Mammary epithelial cell (primary cell): ENCODE measurements at regions of chr1 and their contacts with region 1.

Region 1: DNA sequence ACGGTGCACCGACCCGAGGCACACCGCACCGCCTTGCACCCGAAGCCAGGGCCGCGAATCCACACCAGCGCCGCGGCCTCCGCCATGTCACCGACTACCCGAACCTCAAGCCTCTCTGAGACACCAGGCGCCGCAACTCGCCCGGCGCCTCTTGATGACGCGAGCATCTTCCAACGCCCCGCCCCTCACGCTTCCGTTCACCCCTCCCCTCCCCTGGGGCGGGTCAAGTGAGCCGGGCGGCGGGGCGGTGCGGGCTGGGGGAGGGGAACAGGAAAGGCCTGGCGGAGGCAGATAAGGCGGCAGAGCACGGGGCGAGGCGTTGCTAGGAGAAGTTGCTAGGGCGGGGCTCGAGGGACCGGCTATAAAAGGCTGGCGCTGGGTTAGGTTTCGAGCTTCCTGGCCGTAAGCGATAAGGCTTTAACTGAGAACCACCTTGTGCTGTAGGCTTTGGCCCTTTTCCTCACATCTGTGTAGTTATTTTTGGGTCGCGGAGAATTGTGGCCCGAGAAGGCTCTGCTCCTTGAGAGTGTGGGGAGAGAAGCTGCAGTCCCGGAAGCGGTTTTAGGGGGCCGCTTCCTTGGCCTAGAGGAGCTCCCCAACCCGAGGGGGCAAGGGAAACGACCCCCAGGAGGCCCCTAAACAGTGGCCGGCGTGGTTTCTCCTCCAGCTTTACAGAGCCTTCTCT is at the start of gene SDE2:
- DNase-seq: peak; percentile 98
- H3K4me3 ChIP-seq: peak within 1 kb of the TSS; percentile 89 to 94 (median 93)
- H3K27ac ChIP-seq: peak within 1 kb of the TSS; percentile 94
- H3K4me1 ChIP-seq: peaks cover 29% of the 10 kb centered on the region
- H3K27me3 ChIP-seq: no peaks in the 10 kb centered on the region
- CTCF ChIP-seq: no peak
- total RNA-seq, gene SDE2: 22.0 to 23.5 TPM

Region 2: GRCh38 chr1:225923692-225924555 is 75.4 kb before region 1 on chr1 and contains the start of gene PYCR2:
- CTCF ChIA-PET with region 1: no interaction called
- dilution Hi-C with region 1: loop called (anchors 5 kb)
- in situ Hi-C with region 1: no loop called
- intact Hi-C with region 1: no loop called
- DNase-seq: peak; percentile 94
- H3K4me3 ChIP-seq: peak within 1 kb of the TSS; percentile 69 to 97 (median 75)
- H3K27ac ChIP-seq: peak within 1 kb of the TSS; percentile 69
- H3K4me1 ChIP-seq: peaks cover 40% of the 10 kb centered on the region
- H3K27me3 ChIP-seq: no peaks in the 10 kb centered on the region
- CTCF ChIP-seq: no peak
- total RNA-seq, gene PYCR2: 64.2 to 73.1 TPM

Region 3: GRCh38 chr1:226051356-226051755 is 52.0 kb after region 1 on chr1:
- CTCF ChIA-PET with region 1: no interaction called
- dilution Hi-C with region 1: no loop called
- in situ Hi-C with region 1: loop called in 1 of 2 experiments (anchors 10 kb)
- intact Hi-C with region 1: no loop called
- DNase-seq: peak; percentile 52
- H3K4me3 ChIP-seq: no peak overlapping the region
- H3K27ac ChIP-seq: no peak overlapping the region
- H3K4me1 ChIP-seq: peaks cover 6% of the 10 kb centered on the region
- H3K27me3 ChIP-seq: no peaks in the 10 kb centered on the region
- CTCF ChIP-seq: no peak

Region 4: GRCh38 chr1:226062558-226063223 is 63.3 kb after region 1 on chr1 and contains the start of gene H3-3A:
- CTCF ChIA-PET with region 1: no interaction called
- dilution Hi-C with region 1: no loop called
- in situ Hi-C with region 1: loop called in 1 of 2 experiments (anchors 10 kb)
- intact Hi-C with region 1: loop called (anchors 1 kb)
- DNase-seq: peak; percentile 92
- H3K4me3 ChIP-seq: peak within 1 kb of the TSS; percentile 86 to 99 (median 91)
- H3K27ac ChIP-seq: peak within 1 kb of the TSS; percentile 86
- H3K4me1 ChIP-seq: peaks cover 19% of the 10 kb centered on the region
- H3K27me3 ChIP-seq: no peaks in the 10 kb centered on the region
- CTCF ChIP-seq: peak in 1 of 2 donors; percentile 13
- total RNA-seq, gene H3-3A: 209 to 262 TPM

Region 5: DNA sequence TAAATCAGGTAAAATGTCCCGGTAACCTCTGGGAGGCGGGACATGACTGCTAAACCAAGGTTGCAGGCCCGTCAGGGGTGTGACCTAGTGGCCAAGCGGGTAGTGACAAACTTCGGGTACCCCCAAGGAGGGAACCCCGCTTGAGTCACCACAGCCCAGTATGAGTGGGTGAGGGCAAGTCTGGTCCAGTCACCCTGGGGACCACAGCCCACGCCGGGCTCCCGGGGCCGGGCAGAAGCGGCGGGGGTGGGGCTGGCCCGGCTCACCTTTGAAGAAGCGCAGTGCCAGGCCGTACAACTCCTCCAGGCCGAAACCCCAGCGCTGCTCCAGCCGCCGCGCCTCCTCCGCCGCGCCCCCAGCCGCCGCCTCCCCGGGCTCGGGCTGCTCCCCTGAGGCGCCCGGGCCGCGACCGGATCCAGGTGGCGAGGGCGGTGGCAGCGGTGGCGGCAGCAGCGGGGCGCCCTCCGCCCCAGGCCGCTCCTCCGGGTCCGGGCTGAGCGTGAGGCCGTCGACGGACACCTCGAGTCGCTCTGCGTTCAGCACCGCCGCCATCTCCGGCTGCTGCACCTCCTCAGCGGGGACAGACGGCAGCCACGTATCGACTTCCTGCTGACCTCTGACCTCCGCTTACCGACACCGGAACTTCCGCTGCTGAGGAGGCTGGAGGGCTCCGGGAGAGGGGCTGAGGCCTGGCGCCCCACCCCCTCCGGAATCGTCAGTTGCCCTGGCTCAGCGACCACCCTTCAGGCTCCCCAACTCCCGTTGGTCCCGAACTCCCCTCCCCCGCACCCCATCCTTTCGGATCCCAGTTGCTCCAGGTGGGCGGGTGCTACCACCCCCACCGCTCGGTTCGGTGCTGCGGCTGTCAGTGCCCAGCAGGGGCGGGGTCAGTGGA is 187.0 kb after region 1 on chr1 and contains the start of gene ACBD3:
- CTCF ChIA-PET with region 1: interaction called, 18 read pairs
- dilution Hi-C with region 1: no loop called
- in situ Hi-C with region 1: no loop called
- intact Hi-C with region 1: no loop called
- DNase-seq: peak; percentile 75
- H3K4me3 ChIP-seq: peak within 1 kb of the TSS; percentile 84 to 88 (median 85)
- H3K27ac ChIP-seq: peak within 1 kb of the TSS; percentile 63
- H3K4me1 ChIP-seq: peaks cover 23% of the 10 kb centered on the region
- H3K27me3 ChIP-seq: no peaks in the 10 kb centered on the region
- CTCF ChIP-seq: peak in 1 of 2 donors; percentile 10
- total RNA-seq, gene ACBD3: 50.3 to 53.2 TPM